ENCODE measurements at regions of chr6 and their contacts with region 1.

Region 1: GRCh38 chr6:16183187-16183664 is 54.3 kb downstream of the MYLIP start:
- DNase-seq: no peak
- H3K4me3 Mint-ChIP-seq: no peak overlapping the region
- H3K27ac Mint-ChIP-seq: no peak overlapping the region
- H3K4me1 Mint-ChIP-seq: peaks cover 43% of the 10 kb centered on the region
- H3K27me3 Mint-ChIP-seq: peaks cover 9% of the 10 kb centered on the region

Region 2: DNA sequence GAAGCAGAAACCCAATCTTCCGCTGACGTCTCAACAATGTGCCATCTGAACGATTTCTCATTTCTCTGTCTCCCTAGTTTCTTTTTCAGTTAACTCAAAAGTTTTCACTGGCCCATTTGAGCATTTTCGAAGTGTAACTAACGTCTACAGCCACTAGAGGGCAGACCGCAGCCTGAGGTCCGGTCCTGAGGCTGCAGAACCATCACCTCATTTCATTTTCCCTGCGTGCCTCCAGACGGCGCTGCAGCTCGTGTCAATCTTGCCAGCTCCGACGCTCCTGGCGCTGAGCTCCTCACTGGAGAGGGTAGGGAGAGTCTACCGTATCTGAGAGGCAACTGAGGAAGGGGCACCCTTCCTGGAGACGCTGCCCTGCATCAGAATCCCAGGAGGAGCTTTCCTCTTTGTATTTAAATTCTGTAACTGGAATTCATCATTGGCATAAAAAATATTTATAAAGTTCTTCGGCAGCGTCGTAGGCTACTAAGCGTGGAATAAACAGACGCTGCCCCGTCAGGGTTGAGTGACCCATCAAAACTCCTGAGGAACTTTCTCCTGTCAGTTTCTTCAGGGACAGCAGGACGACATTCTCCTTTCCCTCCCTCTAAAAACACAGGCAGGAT is 491.9 kb before region 1 on chr6:
- CTCF ChIA-PET with region 1: interaction called, 61 read pairs
- POLR2A ChIA-PET with region 1: interaction called, 5 read pairs
- DNase-seq: peak; percentile 84
- H3K4me3 Mint-ChIP-seq: no peak overlapping the region
- H3K27ac Mint-ChIP-seq: peak overlapping the region; percentile 2
- H3K4me1 Mint-ChIP-seq: peaks cover 10% of the 10 kb centered on the region
- H3K27me3 Mint-ChIP-seq: peaks cover 6% of the 10 kb centered on the region

Region 3: GRCh38 chr6:16128759-16129622 is 54.2 kb before region 1 on chr6 and contains the start of gene MYLIP:
- CTCF ChIA-PET with region 1: interaction called, 69 read pairs
- POLR2A ChIA-PET with region 1: interaction called, 78 read pairs
- DNase-seq: peak; percentile 97
- H3K4me3 Mint-ChIP-seq: peak within 1 kb of the TSS; percentile 95
- H3K27ac Mint-ChIP-seq: peak within 1 kb of the TSS; percentile 88
- H3K4me1 Mint-ChIP-seq: peaks cover 41% of the 10 kb centered on the region
- H3K27me3 Mint-ChIP-seq: peaks cover 20% of the 10 kb centered on the region
- total RNA-seq, gene MYLIP: 16.2 to 18.6 TPM

Region 4: GRCh38 chr6:16136621-16137450 is 46.4 kb before region 1 on chr6:
- CTCF ChIA-PET with region 1: interaction called, 69 read pairs
- POLR2A ChIA-PET with region 1: interaction called, 78 read pairs
- DNase-seq: peak; percentile 62
- H3K4me3 Mint-ChIP-seq: peak overlapping the region; percentile 47
- H3K27ac Mint-ChIP-seq: peak overlapping the region; percentile 85
- H3K4me1 Mint-ChIP-seq: peaks cover 60% of the 10 kb centered on the region
- H3K27me3 Mint-ChIP-seq: no peaks in the 10 kb centered on the region

Region 5: DNA sequence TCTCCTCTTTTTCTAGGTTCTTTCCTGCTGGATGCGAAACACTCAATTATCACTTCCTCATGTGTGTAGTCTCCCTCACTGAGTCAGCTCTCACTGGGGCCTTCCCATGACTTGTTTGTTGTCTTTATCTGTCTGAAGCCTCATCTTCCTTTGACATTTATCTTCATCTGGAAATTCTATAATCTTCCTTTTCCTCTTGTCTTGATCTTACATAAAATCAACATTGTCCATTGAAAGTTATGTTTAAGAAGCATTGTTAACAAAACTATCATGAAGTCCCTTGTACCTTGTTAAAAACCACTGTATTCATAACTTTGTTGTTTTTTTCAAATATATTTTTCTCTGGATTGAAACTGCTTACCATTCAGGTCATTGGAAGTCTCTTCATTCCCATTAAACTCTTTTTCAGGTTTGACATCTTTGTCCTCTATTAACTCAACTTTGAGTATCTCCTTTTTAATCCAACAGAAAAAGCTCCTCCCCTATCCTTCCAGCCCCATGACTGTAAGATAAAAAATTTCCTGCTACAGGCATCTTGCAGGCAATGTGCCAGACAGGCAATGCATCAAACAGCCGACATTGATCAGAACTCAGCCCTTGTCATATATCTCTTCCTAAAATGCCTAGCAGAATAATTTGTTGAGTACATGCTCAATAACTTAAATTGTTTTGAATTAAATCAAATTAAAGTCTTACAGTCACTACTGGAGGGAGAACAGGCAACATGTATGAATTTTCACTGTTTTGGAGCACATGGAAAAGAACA is 19.5 kb before region 1 on chr6:
- CTCF ChIA-PET with region 1: interaction called, 11 read pairs
- POLR2A ChIA-PET with region 1: interaction called, 6 read pairs
- DNase-seq: no peak
- H3K4me3 Mint-ChIP-seq: no peak overlapping the region
- H3K27ac Mint-ChIP-seq: no peak overlapping the region
- H3K4me1 Mint-ChIP-seq: peaks cover 20% of the 10 kb centered on the region
- H3K27me3 Mint-ChIP-seq: peaks cover 26% of the 10 kb centered on the region

Region 6: GRCh38 chr6:16206595-16207037 is 23.4 kb after region 1 on chr6:
- CTCF ChIA-PET with region 1: interaction called, 17 read pairs
- POLR2A ChIA-PET with region 1: interaction called, 6 read pairs
- DNase-seq: peak; percentile 42
- H3K4me3 Mint-ChIP-seq: no peak overlapping the region
- H3K27ac Mint-ChIP-seq: no peak overlapping the region
- H3K4me1 Mint-ChIP-seq: peaks cover 2% of the 10 kb centered on the region
- H3K27me3 Mint-ChIP-seq: peaks cover 26% of the 10 kb centered on the region

Measured in activated CD4-positive, alpha-beta memory T cell treated with anti-CD3 and anti-CD28 coated beads, Interleukin-2, amount 10 ng/mL, durations not matched to agents 7 days and 5 days (primary cell).